ENCODE measurements at regions of chr17 and their contacts with region 1.

Region 1: DNA sequence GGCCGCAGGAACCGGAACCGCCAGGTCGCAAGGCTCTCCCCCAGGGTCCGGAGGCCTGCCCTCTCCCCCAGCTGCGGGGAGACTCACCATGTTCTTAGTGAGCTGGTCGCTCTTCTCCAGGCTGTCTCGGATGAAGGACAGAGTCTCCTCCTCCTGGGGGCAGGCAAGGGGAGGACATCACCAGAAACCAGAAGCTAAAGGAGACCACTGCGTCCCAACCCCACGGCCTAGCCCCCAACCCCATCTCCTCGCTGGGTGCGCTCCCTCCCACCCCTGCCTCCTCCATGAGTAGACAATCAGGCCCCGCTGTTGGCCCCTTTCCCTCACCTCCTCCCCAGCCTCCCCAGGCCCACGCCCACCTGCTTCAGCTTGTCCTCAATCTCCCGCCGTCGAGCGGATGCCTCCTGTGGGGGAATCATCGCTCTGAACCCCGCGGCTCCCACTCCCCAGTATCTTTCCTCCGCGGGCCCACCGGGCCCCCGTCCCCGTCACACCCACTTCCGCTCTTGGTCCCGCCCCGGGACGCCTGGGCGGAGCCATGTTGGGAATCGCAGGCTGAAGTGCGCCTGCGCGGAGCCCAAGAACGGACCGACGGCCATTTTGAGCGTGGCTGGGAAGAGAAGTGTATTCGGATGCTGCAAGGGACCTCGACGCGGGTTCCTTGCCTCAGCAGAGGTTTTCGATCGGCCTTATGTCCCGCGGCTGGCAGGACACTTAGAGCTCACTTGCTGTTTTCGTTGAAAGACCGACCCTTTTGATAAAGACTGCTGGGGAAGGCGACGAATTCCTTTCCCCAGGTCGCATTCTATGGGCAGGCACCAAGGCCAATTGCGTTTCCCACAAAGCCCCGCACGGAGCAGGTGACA is at the start of gene EXOC7:
- DNase-seq: peak; percentile 92
- ATAC-seq: peak; percentile 84
- H3K4me3 ChIP-seq: peak within 1 kb of the TSS; percentile 78 to 87 (median 79)
- H3K27ac ChIP-seq: peak within 1 kb of the TSS; percentile 83
- H3K4me1 ChIP-seq: peaks cover 48% of the 10 kb centered on the region
- H3K27me3 ChIP-seq: no peaks in the 10 kb centered on the region; a peak in 1 of 5 replicates
- CTCF ChIP-seq: no peak
- EP300 ChIP-seq: peak; percentile 9 to 17; a peak in 1 of 4 replicates
- POLR2A ChIP-seq: peak; percentile 93 to 97
- RAD21 ChIP-seq: no peak
- total RNA-seq, gene EXOC7: 116 and 118 TPM in 2 replicates

Region 2: DNA sequence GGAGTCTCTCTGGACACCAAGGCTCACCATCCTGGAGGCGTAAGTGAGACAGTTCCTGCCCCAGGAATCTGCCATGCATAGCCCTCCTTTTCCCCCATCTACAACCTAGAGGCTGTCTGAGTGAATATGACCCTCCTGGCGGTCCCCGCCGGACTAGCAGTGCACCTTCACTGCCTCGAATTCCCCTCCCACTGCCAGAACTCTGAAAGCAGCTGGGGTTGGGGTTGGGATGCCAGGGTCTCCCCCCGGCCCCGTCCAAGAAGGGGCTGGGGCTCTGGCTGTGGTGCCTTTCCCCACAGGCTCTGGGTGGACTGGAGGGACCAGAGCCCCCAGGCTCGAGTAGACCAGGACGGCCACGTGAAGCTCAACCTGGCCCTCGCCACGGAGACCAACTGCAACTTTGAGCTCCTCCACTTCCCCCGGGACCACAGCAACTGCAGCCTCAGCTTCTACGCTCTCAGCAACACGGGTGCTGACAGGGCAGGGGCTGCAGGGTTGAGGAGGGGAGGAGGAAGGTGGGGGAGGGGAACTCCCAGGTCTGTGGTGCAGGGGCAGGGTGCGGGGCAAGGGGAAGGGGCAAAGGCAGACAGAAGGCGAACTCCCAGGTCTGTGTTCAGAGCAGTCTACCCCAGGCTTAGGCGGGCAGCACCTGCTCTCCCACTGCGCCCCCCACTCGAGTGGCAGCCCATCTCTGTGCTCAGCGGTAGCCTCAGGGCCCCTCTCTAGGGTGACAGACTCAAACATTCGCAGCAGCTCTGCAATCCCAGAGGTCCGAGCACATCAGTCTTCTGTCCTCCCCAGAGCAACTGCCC is 23.3 kb before region 1 on chr17:
- CTCF ChIA-PET with region 1: no interaction called
- POLR2A ChIA-PET with region 1: interaction called, 5 read pairs
- in situ Hi-C with region 1: no loop called
- intact Hi-C with region 1: loop called (anchors 2 kb)
- DNase-seq: no peak
- ATAC-seq: peak; percentile 37
- H3K4me3 ChIP-seq: no peak overlapping the region
- H3K27ac ChIP-seq: no peak overlapping the region
- H3K4me1 ChIP-seq: peaks cover 31% of the 10 kb centered on the region
- H3K27me3 ChIP-seq: peaks cover 18 to 40% of the 10 kb centered on the region in 2 experiments; a peak in 4 of 5 replicates
- CTCF ChIP-seq: 0 out of 2 replicates have a peak, but pooled peaks have one; percentile 7
- EP300 ChIP-seq: no peak
- POLR2A ChIP-seq: no peak; a peak in 2 of 4 replicates
- RAD21 ChIP-seq: no peak

Region 3: GRCh38 chr17:76147211-76148014 is 43.9 kb after region 1 on chr17:
- CTCF ChIA-PET with region 1: no interaction called
- POLR2A ChIA-PET with region 1: no interaction called
- in situ Hi-C with region 1: no loop called
- intact Hi-C with region 1: no loop called
- DNase-seq: peak; percentile 45
- ATAC-seq: no peak
- H3K4me3 ChIP-seq: no peak overlapping the region
- H3K27ac ChIP-seq: no peak overlapping the region
- H3K4me1 ChIP-seq: peaks cover 32% of the 10 kb centered on the region
- H3K27me3 ChIP-seq: peaks cover 0 to 26% of the 10 kb centered on the region in 2 experiments
- CTCF ChIP-seq: peak; percentile 69
- EP300 ChIP-seq: no peak
- POLR2A ChIP-seq: no peak
- RAD21 ChIP-seq: peak; percentile 50; the same call in 1 of the 2 replicates

Measured in HepG2 (cell line).